ENCODE measurements at regions of chr9 and their contacts with region 1.

Region 1: DNA sequence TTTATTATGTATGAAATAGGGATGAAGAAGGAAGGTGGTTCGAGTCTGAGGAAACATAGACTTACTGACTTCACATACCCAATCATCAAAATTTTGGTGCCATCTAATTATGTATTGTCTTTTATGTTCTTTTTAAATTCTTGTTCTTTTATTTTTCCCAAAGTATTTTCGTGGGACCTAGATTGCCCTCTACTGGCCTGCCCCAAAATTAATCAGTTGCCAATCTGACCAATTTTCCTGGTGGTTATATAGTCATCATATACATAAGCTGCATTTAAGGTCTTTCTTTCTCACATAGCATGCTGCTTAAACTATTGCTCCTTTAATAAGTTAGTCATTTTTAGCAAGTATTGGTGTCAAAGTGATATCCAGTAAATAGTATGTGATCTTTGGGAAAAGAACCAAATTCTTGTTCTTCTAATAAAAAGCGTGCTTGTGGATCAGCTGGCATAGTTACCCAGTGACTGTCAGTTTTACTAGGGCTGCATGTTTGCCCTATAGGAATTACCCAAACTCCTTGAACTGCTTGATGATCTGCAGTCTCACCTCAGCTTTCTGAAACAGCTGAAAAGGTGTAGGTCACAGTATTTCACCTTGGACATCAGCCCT is 223.5 kb downstream of the SH3GL2 start:
- DNase-seq: no peak
- ATAC-seq: no peak
- H3K4me3 ChIP-seq: no peak overlapping the region
- H3K27ac ChIP-seq: no peak overlapping the region
- H3K4me1 ChIP-seq: no peaks in the 10 kb centered on the region
- H3K27me3 ChIP-seq: no peaks in the 10 kb centered on the region
- CTCF ChIP-seq: peak in 1 of 3 experiments; percentile 24; a peak in 2 of 6 replicates
- EP300 ChIP-seq: no peak
- POLR2A ChIP-seq: no peak
- RAD21 ChIP-seq: peak in 1 of 2 experiments; percentile 58; a peak in 3 of 4 replicates

Region 2: GRCh38 chr9:17531642-17532254 is 270.6 kb before region 1 on chr9:
- CTCF ChIA-PET with region 1: no interaction called
- POLR2A ChIA-PET with region 1: no interaction called
- in situ Hi-C with region 1: no loop called
- intact Hi-C with region 1: loop called (anchors 10 kb)
- DNase-seq: peak; percentile 8 to 35 (median 24)
- ATAC-seq: no peak
- H3K4me3 ChIP-seq: no peak overlapping the region
- H3K27ac ChIP-seq: no peak overlapping the region
- H3K4me1 ChIP-seq: no peaks in the 10 kb centered on the region
- H3K27me3 ChIP-seq: no peaks in the 10 kb centered on the region
- CTCF ChIP-seq: peak; percentile 39 to 57 (median 51); a peak in 4 of 6 replicates
- EP300 ChIP-seq: no peak
- POLR2A ChIP-seq: no peak
- RAD21 ChIP-seq: peak; percentile 49 to 54

Region 3: DNA sequence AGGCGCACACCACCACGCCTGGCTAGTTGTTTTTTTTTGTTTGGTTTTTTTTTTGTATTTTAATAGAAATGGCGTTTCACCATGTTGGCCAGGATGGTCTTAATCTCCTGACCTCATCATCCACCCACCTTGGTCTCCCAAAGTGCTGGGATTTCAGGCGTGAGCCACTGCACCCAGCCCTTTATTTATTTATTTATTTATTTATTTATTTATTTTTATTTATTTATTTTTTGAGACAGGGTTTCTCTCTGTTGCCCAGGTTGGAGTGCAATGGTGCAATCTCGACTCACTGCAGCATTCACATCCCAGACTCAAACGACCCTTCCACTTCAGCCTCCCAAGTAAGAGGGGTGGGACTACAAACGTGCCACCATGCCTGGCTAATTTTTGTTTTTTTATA is 608.6 kb after region 1 on chr9:
- CTCF ChIA-PET with region 1: no interaction called
- POLR2A ChIA-PET with region 1: no interaction called
- in situ Hi-C with region 1: no loop called
- intact Hi-C with region 1: no loop called
- DNase-seq: no peak
- ATAC-seq: no peak
- H3K4me3 ChIP-seq: no peak overlapping the region
- H3K27ac ChIP-seq: no peak overlapping the region
- H3K4me1 ChIP-seq: no peaks in the 10 kb centered on the region
- H3K27me3 ChIP-seq: no peaks in the 10 kb centered on the region
- CTCF ChIP-seq: no peak
- EP300 ChIP-seq: no peak
- POLR2A ChIP-seq: no peak
- RAD21 ChIP-seq: no peak